Aorta (tissue), 5 donors: ENCODE measurements at regions of chr3 and their contacts with region 1.

Region 1: DNA sequence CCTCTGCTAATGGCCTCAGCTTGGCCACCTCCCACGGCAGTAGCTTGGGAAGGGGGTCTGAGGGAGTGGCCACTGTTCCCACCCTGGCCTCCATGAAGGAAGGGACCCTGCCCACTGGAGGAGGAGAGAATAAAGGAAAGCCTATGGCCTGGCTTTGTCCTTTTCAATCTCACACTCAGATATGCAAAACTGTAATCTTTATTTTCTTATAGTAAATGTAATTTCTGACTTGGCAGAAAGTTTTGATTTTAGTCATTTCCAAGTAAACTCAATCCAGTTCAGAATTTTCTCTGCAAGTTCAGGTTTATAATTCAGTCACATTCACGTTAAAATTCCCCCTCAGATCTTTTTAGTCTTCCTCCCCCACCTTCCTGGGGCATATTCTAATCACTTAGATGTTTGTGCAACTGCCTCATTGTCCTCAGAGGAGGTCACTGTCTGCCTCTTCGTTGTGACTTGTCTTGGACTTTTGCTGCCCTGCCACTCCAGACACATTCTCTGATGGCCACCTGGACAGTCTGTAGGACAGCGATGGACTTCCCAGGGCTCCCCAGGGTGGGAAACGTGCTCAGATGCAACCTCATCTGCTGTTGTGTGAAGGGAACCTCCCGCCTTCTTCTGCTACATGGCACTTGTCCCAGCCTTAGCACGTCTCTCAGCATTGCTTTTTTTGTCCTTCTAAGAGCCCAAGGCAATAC is 222.8 kb upstream of the TBL1XR1 start:
- DNase-seq: no peak
- ATAC-seq: no peak
- H3K4me3 ChIP-seq: no peak overlapping the region
- H3K27ac ChIP-seq: no peak overlapping the region
- H3K4me1 ChIP-seq: no peaks in the 10 kb centered on the region
- H3K27me3 ChIP-seq: no peaks in the 10 kb centered on the region

Region 2: DNA sequence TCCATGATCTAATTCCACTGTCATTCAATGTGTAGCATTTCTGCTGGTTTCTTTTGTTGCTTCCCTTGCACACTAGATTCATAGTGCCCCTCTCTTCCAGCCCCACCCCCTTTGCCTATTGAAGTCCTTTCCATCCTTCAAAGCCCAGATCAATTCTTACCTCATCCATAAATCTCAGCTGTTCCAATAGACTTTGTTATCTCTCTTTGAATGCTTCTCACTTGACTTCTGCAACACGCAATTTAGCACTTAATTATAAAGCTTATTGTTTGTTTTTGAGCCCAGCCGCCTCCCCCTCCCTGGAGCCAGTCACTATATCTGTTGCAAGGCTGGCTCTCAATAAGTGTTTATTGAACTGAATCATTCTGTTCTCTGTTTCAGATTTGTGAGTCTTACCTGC is 48.2 kb before region 1 on chr3:
- intact Hi-C with region 1: loop called in 1 of 2 experiments (anchors 5 kb)
- DNase-seq: no peak
- ATAC-seq: no peak
- H3K4me3 ChIP-seq: no peak overlapping the region
- H3K27ac ChIP-seq: no peak overlapping the region
- H3K4me1 ChIP-seq: peaks cover 0 to 7% of the 10 kb centered on the region in 2 donors
- H3K27me3 ChIP-seq: no peaks in the 10 kb centered on the region

Region 3: DNA sequence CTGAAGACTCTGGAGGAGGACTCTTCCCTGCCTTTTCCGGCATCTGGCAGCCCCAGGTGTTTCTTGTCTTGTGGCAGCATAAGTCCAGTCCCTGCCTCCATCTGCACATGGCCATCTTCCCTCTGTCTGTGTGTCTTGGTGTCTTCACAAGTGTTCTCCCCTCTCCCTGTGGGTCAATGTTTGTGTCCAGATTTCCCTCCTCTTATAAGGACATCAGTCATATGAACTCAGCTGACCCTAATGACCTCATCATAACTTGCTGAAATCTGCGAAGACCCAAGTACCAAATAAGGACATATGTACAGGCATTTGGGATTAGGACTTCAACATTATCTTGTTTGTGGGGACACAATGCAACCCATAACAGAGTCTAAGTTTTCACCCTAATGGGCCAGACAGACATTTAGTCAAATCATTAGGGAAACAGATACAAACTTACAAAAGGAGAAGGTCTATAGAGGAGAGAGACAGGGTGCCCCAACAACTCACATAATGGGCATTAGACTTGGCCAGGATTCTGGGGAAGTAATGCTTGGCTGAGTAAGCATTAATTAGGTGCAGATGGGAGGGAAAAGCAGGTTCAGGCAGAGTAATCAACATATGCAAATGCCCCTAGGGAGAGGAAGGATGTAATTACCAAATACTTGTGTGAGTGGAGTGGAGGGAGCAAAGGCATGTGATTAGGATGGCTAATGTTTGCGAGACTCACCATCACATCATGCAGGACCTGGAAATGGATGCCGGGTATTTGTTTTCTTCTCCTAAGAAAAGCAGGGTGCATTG is 150.0 kb after region 1 on chr3:
- intact Hi-C with region 1: no loop called
- DNase-seq: no peak
- ATAC-seq: no peak
- H3K4me3 ChIP-seq: no peak overlapping the region
- H3K27ac ChIP-seq: no peak overlapping the region
- H3K4me1 ChIP-seq: peaks cover 0 to 2% of the 10 kb centered on the region in 2 donors
- H3K27me3 ChIP-seq: no peaks in the 10 kb centered on the region